ENCODE measurements at regions of chr4 and their contacts with region 1.

Region 1: DNA sequence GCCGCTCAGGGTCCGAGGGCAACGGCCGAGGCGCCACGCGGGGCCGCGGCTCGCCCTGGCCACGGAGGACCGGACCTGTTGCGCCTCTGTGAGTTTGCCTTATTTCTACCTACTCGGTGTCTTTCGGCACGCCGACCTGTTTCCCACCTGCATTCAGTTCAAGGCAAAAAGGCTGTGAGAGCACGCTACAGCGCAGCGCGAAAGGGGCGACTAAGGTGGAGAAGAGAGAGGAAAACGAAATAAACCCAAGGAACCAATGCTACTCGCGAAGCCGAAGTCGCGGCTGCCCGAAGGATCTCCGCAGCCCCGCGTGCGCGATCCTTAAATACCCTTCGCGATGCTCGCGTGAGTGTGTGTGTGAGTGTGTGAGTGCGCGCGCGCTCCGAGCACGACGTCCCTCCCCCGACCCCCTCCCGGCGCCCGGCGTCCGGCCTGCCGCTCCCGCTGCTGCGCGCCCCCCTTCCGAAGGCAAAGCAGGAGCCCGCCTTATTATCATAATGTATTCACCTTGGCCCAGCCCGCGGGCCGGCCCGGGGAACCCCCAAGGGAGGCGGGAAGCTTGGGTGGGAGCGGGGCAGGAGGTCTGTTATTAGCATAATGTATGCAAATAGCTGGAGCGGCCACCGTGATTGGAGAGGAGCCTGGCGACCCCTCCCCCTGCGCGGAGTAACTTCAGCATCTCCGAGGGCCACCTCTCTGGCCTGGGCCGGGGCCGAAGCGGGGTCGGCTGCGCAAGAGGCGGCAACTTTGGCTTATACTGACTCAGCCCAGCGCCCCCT is at the start of gene COL25A1:
- DNase-seq: no peak
- ATAC-seq: no peak
- H3K4me3 ChIP-seq: no peak within 1 kb of the TSS
- H3K27ac ChIP-seq: no peak within 1 kb of the TSS
- H3K4me1 ChIP-seq: no peaks in the 10 kb centered on the region; a peak in 1 of 5 replicates
- H3K27me3 ChIP-seq: no peaks in the 10 kb centered on the region; a peak in 1 of 5 replicates
- CTCF ChIP-seq: no peak
- EP300 ChIP-seq: no peak
- POLR2A ChIP-seq: no peak
- RAD21 ChIP-seq: no peak
- polyA plus RNA-seq, gene COL25A1: 0.07 to 0.17 TPM

Region 2: DNA sequence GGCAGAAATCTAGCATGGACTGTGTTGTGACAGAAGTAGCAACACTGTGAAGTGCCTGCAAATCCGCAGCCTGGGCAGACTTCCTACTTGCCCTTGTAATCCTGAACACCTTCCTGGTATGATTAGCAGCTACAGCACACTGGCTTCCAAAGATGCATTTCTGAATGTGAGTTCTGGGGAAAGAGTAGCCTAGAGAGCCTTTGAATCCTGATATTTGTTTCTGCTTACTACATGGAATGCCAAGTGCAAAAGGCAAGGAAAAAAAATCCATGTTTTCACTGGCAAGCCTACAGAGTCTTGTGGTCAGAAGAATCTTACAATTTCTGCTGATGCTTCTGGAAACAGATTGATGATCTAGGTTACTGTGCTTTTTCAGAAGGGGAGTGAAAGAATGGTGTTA is 223.8 kb before region 1 on chr4:
- CTCF ChIA-PET with region 1: no interaction called
- POLR2A ChIA-PET with region 1: no interaction called
- in situ Hi-C with region 1: no loop called
- intact Hi-C with region 1: loop called (anchors 2 kb)
- DNase-seq: no peak
- ATAC-seq: no peak; the same call in 2 of the 3 replicates
- H3K4me3 ChIP-seq: no peak overlapping the region
- H3K27ac ChIP-seq: no peak overlapping the region
- H3K4me1 ChIP-seq: no peaks in the 10 kb centered on the region; a peak in 1 of 5 replicates
- H3K27me3 ChIP-seq: no peaks in the 10 kb centered on the region
- CTCF ChIP-seq: no peak
- EP300 ChIP-seq: no peak
- POLR2A ChIP-seq: no peak
- RAD21 ChIP-seq: no peak